Sciatic nerve (tissue), 2 donors: ENCODE measurements at regions of chr12 and their contacts with region 1.

Region 1: GRCh38 chr12:32455607-32456071 is 56.3 kb downstream of the FGD4 start:
- DNase-seq: no peak
- ATAC-seq: peak; percentile 82

Region 2: DNA sequence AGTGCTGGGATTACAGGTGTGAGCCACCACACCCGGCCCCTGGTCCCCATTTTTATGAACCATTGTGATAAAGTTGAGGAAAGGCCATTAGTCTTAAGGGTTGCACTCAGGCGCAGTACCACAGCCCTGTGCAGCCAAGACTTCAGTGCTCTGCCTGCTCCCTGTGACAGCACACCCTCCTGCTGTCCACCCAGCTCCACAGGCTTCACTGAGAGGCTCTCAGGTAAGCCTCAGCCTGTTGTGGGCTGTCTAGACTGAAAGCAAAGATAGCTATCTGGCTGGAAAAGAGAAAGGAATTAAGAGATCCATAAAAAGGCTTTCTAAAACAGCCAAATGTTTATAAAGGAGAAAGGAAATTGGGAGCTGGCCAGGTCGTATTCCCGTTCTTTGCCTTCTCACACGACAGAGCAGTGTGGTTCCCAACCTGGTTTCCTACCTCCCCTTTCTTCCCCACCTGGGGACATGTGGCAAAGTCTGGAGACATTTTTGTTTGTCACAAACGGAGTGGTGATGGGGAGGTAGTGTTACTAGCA is 204.3 kb after region 1 on chr12:
- intact Hi-C with region 1: loop called (anchors 10 kb)
- DNase-seq: no peak
- ATAC-seq: no peak

Region 3: GRCh38 chr12:34398706-34399630 is 1943.3 kb after region 1 on chr12:
- intact Hi-C with region 1: no loop called
- DNase-seq: peak; percentile 19
- ATAC-seq: no peak